BJ (cell line): ENCODE measurements at regions of chr5 and their contacts with region 1.

Region 1: DNA sequence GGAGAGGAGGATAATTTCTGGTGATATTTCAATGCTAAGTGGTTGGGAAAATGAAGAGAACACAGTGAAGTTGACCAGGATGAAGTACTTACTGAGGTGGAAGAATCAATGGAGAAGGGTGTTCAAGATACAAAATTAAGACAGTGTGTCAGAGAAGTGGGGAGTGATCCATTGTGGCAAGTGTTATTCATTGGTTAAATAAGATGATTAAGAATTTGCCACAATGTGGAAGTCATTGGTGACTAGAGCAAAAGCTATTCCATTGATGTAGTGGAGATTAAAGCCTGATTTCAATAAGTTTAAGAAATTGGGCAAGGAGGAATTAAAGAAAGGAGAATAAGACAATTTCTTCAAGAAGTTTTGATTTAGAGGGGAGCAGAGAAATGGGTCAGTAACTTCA is 118.9 kb downstream of the GHR start:
- DNase-seq: no peak
- H3K4me3 ChIP-seq: no peak overlapping the region
- H3K27me3 ChIP-seq: no peaks in the 10 kb centered on the region
- CTCF ChIP-seq: no peak

Region 2: GRCh38 chr5:42531611-42532010 is 10.5 kb before region 1 on chr5:
- CTCF ChIA-PET with region 1: interaction called, 4 read pairs
- POLR2A ChIA-PET with region 1: interaction called, 13 read pairs
- DNase-seq: no peak
- H3K4me3 ChIP-seq: no peak overlapping the region
- H3K27me3 ChIP-seq: no peaks in the 10 kb centered on the region
- CTCF ChIP-seq: no peak